Panc1 (cell line): ENCODE measurements at regions of chr12 and their contacts with region 1.

Region 1: DNA sequence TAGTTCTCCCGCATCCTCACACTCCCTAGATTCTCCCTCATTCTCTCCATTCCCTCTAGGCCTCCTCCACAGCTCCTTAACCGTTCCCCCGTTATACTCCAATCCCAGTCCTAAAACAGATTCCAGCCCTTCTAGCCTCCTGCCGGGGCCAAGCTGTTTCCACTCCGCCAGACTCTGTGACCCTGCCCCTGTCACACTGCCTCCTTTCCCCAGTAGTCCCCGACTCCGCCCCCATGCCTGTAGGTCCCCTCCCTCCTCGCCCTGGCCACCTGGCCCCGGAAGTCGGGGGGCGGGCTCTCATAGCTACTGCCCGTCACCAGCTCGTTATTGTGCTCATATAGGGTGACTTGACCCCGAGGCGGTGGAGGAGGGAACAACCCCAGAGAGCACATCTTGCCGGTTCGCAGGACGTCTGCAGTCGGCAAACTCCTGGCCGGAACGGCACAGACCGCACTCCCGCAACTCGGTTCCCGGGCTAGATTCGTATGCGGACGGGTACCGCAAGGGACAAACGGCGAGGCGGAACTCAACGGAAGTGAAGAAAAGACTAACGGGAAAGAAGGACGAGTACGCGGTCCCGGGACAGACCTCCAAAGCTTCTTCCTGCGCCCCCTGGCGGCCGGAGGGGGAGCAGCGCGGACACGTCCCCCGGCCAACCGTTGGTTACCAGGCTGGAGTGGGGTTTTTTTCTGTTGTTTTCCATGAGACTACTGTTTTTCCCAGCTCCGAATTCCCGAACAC is at the start of gene AAAS:
- DNase-seq: peak; percentile 90
- ATAC-seq: peak; percentile 92
- H3K4me3 ChIP-seq: peak within 1 kb of the TSS; percentile 52 to 74
- H3K27ac ChIP-seq: peak within 1 kb of the TSS; percentile 92
- H3K4me1 ChIP-seq: peaks cover 20% of the 10 kb centered on the region
- H3K27me3 ChIP-seq: no peaks in the 10 kb centered on the region
- CTCF ChIP-seq: peak; percentile 99
- total RNA-seq, gene AAAS: 77.7 TPM

Region 2: GRCh38 chr12:53054112-53054833 is 267.0 kb before region 1 on chr12:
- CTCF ChIA-PET with region 1: interaction called, 10 read pairs
- POLR2A ChIA-PET with region 1: no interaction called
- in situ Hi-C with region 1: no loop called
- intact Hi-C with region 1: no loop called
- DNase-seq: no peak
- ATAC-seq: peak; percentile 82
- H3K4me3 ChIP-seq: peak overlapping the region; percentile 69 to 74
- H3K27ac ChIP-seq: peak overlapping the region; percentile 93
- H3K4me1 ChIP-seq: peaks cover 45% of the 10 kb centered on the region
- H3K27me3 ChIP-seq: no peaks in the 10 kb centered on the region
- CTCF ChIP-seq: no peak

Region 3: GRCh38 chr12:53308276-53308675 is 13.0 kb before region 1 on chr12:
- CTCF ChIA-PET with region 1: interaction called, 10 read pairs
- POLR2A ChIA-PET with region 1: interaction called, 4 read pairs
- in situ Hi-C with region 1: no loop called
- intact Hi-C with region 1: no loop called
- DNase-seq: no peak
- ATAC-seq: no peak
- H3K4me3 ChIP-seq: no peak overlapping the region
- H3K27ac ChIP-seq: no peak overlapping the region
- H3K4me1 ChIP-seq: peaks cover 2% of the 10 kb centered on the region; the same call in 1 of the 2 replicates
- H3K27me3 ChIP-seq: no peaks in the 10 kb centered on the region
- CTCF ChIP-seq: no peak

Region 4: DNA sequence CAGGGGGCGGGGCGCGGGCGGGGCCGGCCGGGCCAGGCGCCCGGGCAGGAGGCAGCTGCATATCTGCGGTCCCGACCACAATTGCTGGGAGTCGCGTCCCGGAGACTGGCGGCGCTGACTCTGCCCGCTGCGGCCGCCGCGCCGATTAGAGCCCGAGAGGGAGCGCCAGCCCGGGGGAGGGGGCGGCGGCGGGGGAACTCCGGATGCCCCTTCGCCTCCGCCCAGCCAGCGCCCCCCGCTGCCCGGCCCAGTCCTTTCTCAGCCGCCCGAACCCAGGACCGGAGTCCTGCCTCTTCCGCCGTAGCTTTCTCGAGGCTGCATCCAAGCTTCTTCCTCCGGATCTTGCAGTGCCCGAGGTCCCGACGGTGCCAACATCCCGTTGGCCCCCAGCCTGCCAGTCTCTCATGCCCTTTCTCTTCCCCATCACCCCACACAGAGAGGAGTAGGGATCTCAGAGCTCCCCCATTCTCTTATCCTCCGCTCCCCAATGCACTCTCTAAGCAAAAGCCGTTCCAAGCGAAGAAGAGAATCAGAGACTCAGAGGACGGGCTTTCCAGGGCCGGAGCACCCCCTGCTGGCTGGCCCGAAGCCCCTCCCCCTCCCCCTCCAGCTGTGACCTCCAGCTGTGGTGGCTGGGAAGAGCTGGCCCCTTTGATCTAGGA is 23.7 kb after region 1 on chr12:
- CTCF ChIA-PET with region 1: interaction called, 19 read pairs
- POLR2A ChIA-PET with region 1: no interaction called
- in situ Hi-C with region 1: no loop called
- intact Hi-C with region 1: no loop called
- DNase-seq: no peak
- ATAC-seq: peak; percentile 90
- H3K4me3 ChIP-seq: peak overlapping the region; percentile 60 to 86
- H3K27ac ChIP-seq: peak overlapping the region; percentile 64
- H3K4me1 ChIP-seq: peaks cover 10% of the 10 kb centered on the region; the same call in 1 of the 2 replicates
- H3K27me3 ChIP-seq: no peaks in the 10 kb centered on the region
- CTCF ChIP-seq: peak; percentile 91

Region 5: GRCh38 chr12:53418221-53418620 is 97.0 kb after region 1 on chr12:
- CTCF ChIA-PET with region 1: interaction called, 30 read pairs
- POLR2A ChIA-PET with region 1: interaction called, 3 read pairs
- in situ Hi-C with region 1: no loop called
- intact Hi-C with region 1: loop called (anchors 2 kb)
- DNase-seq: no peak
- ATAC-seq: no peak
- H3K4me3 ChIP-seq: no peak overlapping the region
- H3K27ac ChIP-seq: no peak overlapping the region
- H3K4me1 ChIP-seq: peaks cover 16% of the 10 kb centered on the region
- H3K27me3 ChIP-seq: no peaks in the 10 kb centered on the region
- CTCF ChIP-seq: no peak

Region 6: GRCh38 chr12:53508534-53509199 is 187.4 kb after region 1 on chr12:
- CTCF ChIA-PET with region 1: interaction called, 3 read pairs
- POLR2A ChIA-PET with region 1: no interaction called
- in situ Hi-C with region 1: no loop called
- intact Hi-C with region 1: loop called (anchors 5 kb)
- DNase-seq: peak; percentile 75
- ATAC-seq: peak; percentile 92
- H3K4me3 ChIP-seq: no peak overlapping the region
- H3K27ac ChIP-seq: no peak overlapping the region
- H3K4me1 ChIP-seq: peaks cover 7% of the 10 kb centered on the region
- H3K27me3 ChIP-seq: no peaks in the 10 kb centered on the region
- CTCF ChIP-seq: peak; percentile 96